ENCODE measurements at regions of chr1 and their contacts with region 1.

Region 1: GRCh38 chr1:247576495-247576894 is 11.7 kb upstream of the OR2G2 start:
- DNase-seq: peak in 1 of 2 donors; percentile 7
- ATAC-seq: no peak
- H3K4me3 ChIP-seq: no peak overlapping the region
- H3K4me3 Mint-ChIP-seq: no peak overlapping the region
- H3K27ac ChIP-seq: no peak overlapping the region
- H3K27ac Mint-ChIP-seq: no peak overlapping the region
- H3K4me1 ChIP-seq: no peaks in the 10 kb centered on the region
- H3K4me1 Mint-ChIP-seq: no peaks in the 10 kb centered on the region
- H3K27me3 ChIP-seq: no peaks in the 10 kb centered on the region
- H3K27me3 Mint-ChIP-seq: no peaks in the 10 kb centered on the region
- CTCF ChIP-seq: no peak

Region 2: DNA sequence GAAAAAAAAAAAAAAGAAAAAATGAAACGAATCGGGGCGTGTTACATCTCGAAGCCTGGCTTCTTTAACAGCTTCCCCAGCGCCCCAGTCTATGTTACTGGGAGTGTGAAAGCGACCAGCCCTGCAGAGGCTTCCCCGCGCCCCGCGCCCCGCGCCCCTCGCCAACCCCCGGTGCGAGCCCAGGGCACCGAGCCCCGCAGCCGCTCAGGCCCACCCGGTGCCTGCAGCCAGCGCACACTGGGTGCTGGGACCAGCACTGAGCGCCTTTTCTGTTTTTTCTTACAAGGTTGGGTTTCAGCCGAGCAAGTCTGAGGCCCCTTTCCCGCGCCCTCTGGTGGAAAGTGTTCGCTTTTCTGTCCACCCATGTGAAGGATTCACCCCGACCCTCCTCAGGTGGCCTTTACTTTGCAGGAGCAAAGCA is 202.8 kb before region 1 on chr1:
- intact Hi-C with region 1: loop called (anchors 5 kb)
- DNase-seq: peak; percentile 35 to 76
- ATAC-seq: peak; percentile 75 to 84 (median 79)
- H3K4me3 ChIP-seq: no peak overlapping the region
- H3K4me3 Mint-ChIP-seq: peak overlapping the region; percentile 52
- H3K27ac ChIP-seq: no peak overlapping the region
- H3K27ac Mint-ChIP-seq: no peak overlapping the region
- H3K4me1 ChIP-seq: peaks cover 4% of the 10 kb centered on the region
- H3K4me1 Mint-ChIP-seq: peaks cover 0 to 4% of the 10 kb centered on the region in 2 donors
- H3K27me3 ChIP-seq: no peaks in the 10 kb centered on the region
- H3K27me3 Mint-ChIP-seq: peaks cover 0 to 7% of the 10 kb centered on the region in 2 donors
- CTCF ChIP-seq: peak; percentile 50

Region 3: GRCh38 chr1:247390116-247390791 is 186.2 kb before region 1 on chr1:
- intact Hi-C with region 1: loop called (anchors 1 kb)
- DNase-seq: peak; percentile 70 to 94
- ATAC-seq: peak; percentile 95 to 99 (median 99)
- H3K4me3 ChIP-seq: peak overlapping the region; percentile 17
- H3K4me3 Mint-ChIP-seq: peak overlapping the region; percentile 84
- H3K27ac ChIP-seq: peak overlapping the region; percentile 8
- H3K27ac Mint-ChIP-seq: peak overlapping the region; percentile 74 to 84
- H3K4me1 ChIP-seq: peaks cover 12% of the 10 kb centered on the region
- H3K4me1 Mint-ChIP-seq: peaks cover 7 to 8% of the 10 kb centered on the region in 2 donors
- H3K27me3 ChIP-seq: no peaks in the 10 kb centered on the region
- H3K27me3 Mint-ChIP-seq: no peaks in the 10 kb centered on the region
- CTCF ChIP-seq: peak; percentile 96

Region 4: DNA sequence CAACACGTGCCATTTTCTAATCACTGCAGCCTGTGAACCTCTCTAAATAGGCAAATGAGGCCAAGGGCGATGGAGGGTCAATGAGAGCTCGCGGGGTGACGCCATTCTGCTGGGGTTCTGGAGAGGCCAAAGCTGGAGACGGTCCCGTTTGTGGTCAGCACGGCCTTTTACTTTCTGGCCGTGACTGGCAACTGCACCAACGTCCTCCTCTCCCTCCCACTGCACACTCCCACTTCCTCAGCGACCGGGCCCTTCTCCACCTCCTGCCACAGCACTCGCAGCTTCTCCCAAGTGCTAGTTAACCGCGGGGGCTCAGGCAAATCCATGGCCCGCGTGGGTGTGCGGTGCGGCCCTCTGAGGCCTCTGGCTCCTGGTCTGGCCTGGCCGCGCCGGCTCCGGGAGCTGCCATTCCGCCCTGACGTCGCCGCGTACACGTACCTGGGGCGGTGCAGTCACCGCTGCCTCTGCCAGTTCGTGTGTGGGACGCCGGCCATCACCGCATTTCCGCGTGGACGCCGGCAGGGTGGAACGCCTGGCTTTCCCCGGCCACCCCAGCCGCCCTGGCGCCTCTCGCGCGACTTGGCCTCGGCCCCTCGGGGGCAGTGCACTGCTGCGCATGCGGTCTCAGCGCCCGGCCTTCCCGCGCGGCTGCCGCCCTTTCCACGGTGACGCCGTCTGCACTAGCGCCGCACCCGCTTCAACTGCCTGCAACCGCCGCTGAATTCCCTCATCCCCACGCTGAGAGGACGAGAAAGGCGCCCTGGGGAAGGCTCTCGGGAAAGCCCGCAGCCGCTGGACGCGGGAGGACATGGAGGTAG is 58.5 kb before region 1 on chr1:
- intact Hi-C with region 1: no loop called
- DNase-seq: peak in 1 of 2 donors; percentile 4
- ATAC-seq: peak; percentile 35 to 79 (median 42)
- H3K4me3 ChIP-seq: no peak overlapping the region
- H3K4me3 Mint-ChIP-seq: peak overlapping the region; percentile 71
- H3K27ac ChIP-seq: no peak overlapping the region
- H3K27ac Mint-ChIP-seq: no peak overlapping the region
- H3K4me1 ChIP-seq: no peaks in the 10 kb centered on the region
- H3K4me1 Mint-ChIP-seq: peaks cover 0 to 7% of the 10 kb centered on the region in 2 donors
- H3K27me3 ChIP-seq: no peaks in the 10 kb centered on the region
- H3K27me3 Mint-ChIP-seq: peaks cover 3 to 5% of the 10 kb centered on the region in 2 donors
- CTCF ChIP-seq: no peak

Measured in natural killer cell (primary cell).